Activated CD4-positive, alpha-beta memory T cell treated with anti-CD3 and anti-CD28 coated beads, Interleukin-2, amount 10 ng/mL, durations not matched to agents 7 days and 5 days (primary cell): ENCODE measurements at regions of chr19 and their contacts with region 1.

Region 1: DNA sequence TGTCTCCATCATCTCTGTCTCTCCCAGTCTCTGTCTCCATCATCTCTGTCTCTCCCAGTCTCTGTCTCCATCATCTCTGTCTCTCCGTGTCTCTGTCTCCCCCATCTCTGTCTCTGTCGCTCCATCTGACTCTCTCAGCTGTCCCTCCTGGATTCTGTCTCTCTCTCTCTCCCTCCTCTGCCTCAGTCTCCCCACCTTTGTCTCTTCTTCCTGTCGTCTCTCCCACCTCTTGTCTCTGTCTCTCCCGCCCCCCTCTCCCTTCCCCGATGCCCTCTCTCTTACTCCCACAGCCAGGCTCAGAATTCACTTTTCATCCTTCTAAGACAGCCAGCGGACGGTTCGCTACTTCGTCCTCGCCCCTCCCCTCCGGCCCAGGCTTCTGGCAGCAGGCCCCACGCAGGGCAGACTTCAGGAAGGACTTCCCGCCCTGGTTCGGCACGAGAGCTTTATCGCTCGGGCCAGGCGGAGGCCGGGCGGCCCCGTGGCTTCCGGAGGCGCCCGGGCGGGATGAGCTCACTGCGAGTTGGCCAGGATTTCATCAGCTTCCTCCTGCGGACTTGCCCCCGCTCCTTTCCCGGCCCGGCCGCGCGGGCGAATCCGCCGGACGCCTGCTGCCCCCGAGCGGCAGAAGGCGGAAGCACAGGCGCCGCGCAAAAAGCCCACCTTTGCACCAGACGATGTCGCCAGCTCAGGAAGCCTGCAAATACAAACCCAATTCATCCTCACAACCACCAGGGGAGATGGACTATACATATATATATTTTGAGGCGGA is 12.4 kb upstream of the CCDC9 start:
- DNase-seq: peak; percentile 94
- H3K4me3 Mint-ChIP-seq: peak overlapping the region; percentile 70
- H3K27ac Mint-ChIP-seq: peak overlapping the region; percentile 87
- H3K4me1 Mint-ChIP-seq: peaks cover 30% of the 10 kb centered on the region
- H3K27me3 Mint-ChIP-seq: peaks cover 7% of the 10 kb centered on the region

Region 2: GRCh38 chr19:47081111-47081510 is 162.9 kb before region 1 on chr19:
- CTCF ChIA-PET with region 1: interaction called, 12 read pairs
- POLR2A ChIA-PET with region 1: no interaction called
- DNase-seq: no peak
- H3K4me3 Mint-ChIP-seq: no peak overlapping the region
- H3K27ac Mint-ChIP-seq: no peak overlapping the region
- H3K4me1 Mint-ChIP-seq: peaks cover 2% of the 10 kb centered on the region
- H3K27me3 Mint-ChIP-seq: no peaks in the 10 kb centered on the region

Region 3: DNA sequence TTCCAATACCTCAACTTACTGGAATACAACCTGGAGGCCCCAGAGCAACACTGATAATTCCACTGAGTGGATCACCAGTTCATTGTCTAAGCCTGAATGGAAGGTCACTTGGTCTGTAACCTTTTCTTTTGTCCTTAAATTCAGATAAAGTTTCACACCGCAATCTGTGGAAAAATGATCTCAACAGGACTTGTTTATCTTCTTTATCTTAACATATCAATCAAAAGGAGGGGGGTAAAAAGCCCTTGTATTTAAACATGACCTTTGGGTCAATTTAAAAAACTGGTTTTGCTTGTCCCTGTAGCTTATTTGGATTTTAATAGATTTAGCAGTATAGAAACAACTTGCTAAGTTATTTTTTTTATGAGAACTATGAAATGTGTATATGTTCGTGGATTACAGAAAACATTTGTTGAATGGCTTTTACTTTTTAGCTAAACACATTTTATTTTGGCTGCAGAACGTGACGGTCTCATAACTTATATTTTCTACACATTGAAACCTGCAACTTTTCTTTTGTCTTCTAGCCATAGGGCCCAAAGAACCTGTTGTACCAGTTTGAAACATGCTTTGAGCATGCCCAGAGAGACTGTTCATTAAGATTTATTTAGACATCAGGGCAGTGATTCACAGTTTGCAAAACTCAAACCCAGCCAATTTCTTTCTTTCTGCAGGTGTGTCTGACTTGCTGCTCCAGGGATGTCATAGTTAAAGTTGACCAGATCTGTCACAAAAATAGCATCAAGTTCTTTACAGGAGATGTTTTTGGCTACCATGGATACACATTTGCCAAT is 91.5 kb before region 1 on chr19:
- CTCF ChIA-PET with region 1: interaction called, 65 read pairs
- POLR2A ChIA-PET with region 1: interaction called, 8 read pairs
- DNase-seq: no peak
- H3K4me3 Mint-ChIP-seq: no peak overlapping the region
- H3K27ac Mint-ChIP-seq: no peak overlapping the region
- H3K4me1 Mint-ChIP-seq: peaks cover 45% of the 10 kb centered on the region
- H3K27me3 Mint-ChIP-seq: no peaks in the 10 kb centered on the region

Region 4: GRCh38 chr19:47200530-47200929 is 43.4 kb before region 1 on chr19:
- CTCF ChIA-PET with region 1: interaction called, 23 read pairs
- POLR2A ChIA-PET with region 1: no interaction called
- DNase-seq: no peak
- H3K4me3 Mint-ChIP-seq: no peak overlapping the region
- H3K27ac Mint-ChIP-seq: no peak overlapping the region
- H3K4me1 Mint-ChIP-seq: peaks cover 2% of the 10 kb centered on the region
- H3K27me3 Mint-ChIP-seq: no peaks in the 10 kb centered on the region

Region 5: GRCh38 chr19:47231215-47231984 is 12.6 kb before region 1 on chr19:
- CTCF ChIA-PET with region 1: interaction called, 134 read pairs
- POLR2A ChIA-PET with region 1: interaction called, 110 read pairs
- DNase-seq: peak; percentile 92
- H3K4me3 Mint-ChIP-seq: peak overlapping the region; percentile 63
- H3K27ac Mint-ChIP-seq: peak overlapping the region; percentile 85
- H3K4me1 Mint-ChIP-seq: peaks cover 29% of the 10 kb centered on the region
- H3K27me3 Mint-ChIP-seq: no peaks in the 10 kb centered on the region

Region 6: GRCh38 chr19:47341734-47342133 is 97.8 kb after region 1 on chr19:
- CTCF ChIA-PET with region 1: no interaction called
- POLR2A ChIA-PET with region 1: no interaction called
- DNase-seq: no peak
- H3K4me3 Mint-ChIP-seq: no peak overlapping the region
- H3K27ac Mint-ChIP-seq: no peak overlapping the region
- H3K4me1 Mint-ChIP-seq: peaks cover 6% of the 10 kb centered on the region
- H3K27me3 Mint-ChIP-seq: peaks cover 3% of the 10 kb centered on the region